ENCODE measurements at regions of chr21 and their contacts with region 1.

Region 1: GRCh38 chr21:33811167-33812010 is 104.2 kb downstream of the ATP5PO start:
- DNase-seq: no peak
- H3K4me3 ChIP-seq: no peak overlapping the region
- H3K27ac ChIP-seq: no peak overlapping the region
- H3K4me1 ChIP-seq: no peaks in the 10 kb centered on the region
- H3K27me3 ChIP-seq: no peaks in the 10 kb centered on the region
- CTCF ChIP-seq: no peak

Region 2: DNA sequence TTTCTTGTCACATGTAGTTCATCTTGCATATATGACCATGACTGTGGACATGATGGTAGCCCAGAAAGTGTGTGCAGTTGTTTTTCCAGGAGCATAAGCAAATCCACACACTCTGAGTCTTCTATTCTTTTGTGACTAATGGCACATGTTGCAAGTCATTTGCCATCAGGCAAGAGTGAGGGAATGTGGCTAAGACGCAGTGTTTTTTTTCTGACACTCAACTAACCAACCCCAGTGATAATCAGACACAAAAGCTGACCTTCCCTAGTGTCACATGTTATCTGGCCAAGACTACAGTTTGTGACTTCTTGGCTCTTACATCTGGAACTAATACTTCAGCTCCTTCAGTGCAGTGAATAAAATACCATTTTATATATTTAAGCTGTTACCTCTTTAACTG is 60.3 kb before region 1 on chr21:
- CTCF ChIA-PET with region 1: no interaction called
- dilution Hi-C with region 1: loop called (anchors 5 kb)
- in situ Hi-C with region 1: no loop called
- intact Hi-C with region 1: no loop called
- DNase-seq: no peak
- H3K4me3 ChIP-seq: no peak overlapping the region
- H3K27ac ChIP-seq: no peak overlapping the region
- H3K4me1 ChIP-seq: no peaks in the 10 kb centered on the region
- H3K27me3 ChIP-seq: no peaks in the 10 kb centered on the region
- CTCF ChIP-seq: no peak

Region 3: GRCh38 chr21:33866826-33867225 is 55.4 kb after region 1 on chr21:
- CTCF ChIA-PET with region 1: no interaction called
- dilution Hi-C with region 1: loop called (anchors 5 kb)
- in situ Hi-C with region 1: no loop called
- intact Hi-C with region 1: no loop called
- DNase-seq: no peak
- H3K4me3 ChIP-seq: no peak overlapping the region
- H3K27ac ChIP-seq: no peak overlapping the region
- H3K4me1 ChIP-seq: no peaks in the 10 kb centered on the region
- H3K27me3 ChIP-seq: peaks cover 3% of the 10 kb centered on the region
- CTCF ChIP-seq: no peak

Region 4: DNA sequence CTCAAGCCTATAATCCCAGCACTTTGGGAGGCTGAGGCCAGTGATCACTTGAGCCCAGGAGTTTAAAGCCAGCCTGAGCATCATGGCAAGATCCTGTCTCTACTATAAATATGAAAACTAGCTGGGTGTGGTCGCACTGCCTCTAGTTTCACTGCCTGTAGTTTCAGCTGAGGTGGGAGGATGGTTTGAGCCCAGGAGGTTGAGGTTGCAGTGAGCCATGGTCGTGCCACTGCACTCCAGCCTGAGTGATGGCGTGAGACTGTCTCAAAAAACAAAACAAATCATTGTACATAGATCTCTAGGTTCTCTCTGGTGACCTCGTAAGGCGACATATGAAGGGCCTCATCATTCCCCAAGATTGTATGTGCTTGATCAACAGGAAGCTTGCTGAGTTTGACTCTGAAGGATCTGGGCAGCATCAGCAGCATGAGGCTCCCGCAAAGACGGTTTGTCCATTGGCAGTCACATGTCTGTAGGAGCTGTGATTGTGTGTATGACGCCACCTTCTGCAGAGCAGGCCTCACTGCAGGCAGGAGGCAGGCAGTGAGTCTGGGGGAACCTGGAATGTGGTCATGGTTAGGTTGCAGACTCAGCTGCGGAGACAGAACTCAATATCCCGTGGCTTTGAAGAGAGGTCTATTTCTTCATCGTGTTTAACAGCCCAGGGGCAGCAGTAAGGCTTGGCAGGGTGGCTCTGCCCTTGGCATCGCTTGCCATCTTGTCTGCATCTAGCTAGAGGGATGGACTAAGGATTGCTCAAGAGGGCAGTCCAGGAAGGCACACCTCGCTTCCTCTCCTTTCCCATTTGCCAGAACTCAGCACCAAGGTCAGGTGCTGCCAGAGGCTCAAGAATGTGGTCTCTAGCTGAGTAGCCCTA is 90.3 kb after region 1 on chr21:
- CTCF ChIA-PET with region 1: no interaction called
- dilution Hi-C with region 1: loop called (anchors 5 kb)
- in situ Hi-C with region 1: no loop called
- intact Hi-C with region 1: no loop called
- DNase-seq: peak; percentile 33
- H3K4me3 ChIP-seq: no peak overlapping the region
- H3K27ac ChIP-seq: no peak overlapping the region
- H3K4me1 ChIP-seq: no peaks in the 10 kb centered on the region
- H3K27me3 ChIP-seq: no peaks in the 10 kb centered on the region
- CTCF ChIP-seq: peak; percentile 54 to 69